ENCODE measurements at regions of chr15 and their contacts with region 1.

Region 1: DNA sequence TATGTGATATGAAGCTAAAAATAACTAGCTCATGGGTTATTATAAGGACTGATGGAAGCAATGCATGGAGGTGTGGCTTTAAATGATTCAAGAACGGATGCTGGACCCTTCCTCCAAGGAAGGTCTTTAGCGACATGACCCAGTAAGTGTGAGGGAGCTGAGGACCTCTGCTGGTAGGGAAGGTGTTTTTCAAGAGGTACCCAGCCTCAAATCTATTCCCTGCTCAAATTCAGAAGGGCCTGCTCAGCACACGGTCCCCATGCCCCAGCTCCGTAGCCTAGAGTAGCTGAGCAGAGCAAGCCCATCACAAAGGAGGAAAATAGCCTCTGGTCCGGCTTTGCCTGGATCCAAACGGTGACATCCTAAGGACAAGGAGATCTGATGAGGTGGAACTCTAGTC is 266.2 kb upstream of the IGF1R start:
- DNase-seq: peak in 1 of 2 donors; percentile 32
- H3K4me3 ChIP-seq: no peak overlapping the region
- H3K27ac ChIP-seq: no peak overlapping the region
- H3K4me1 ChIP-seq: no peaks in the 10 kb centered on the region
- H3K27me3 ChIP-seq: no peaks in the 10 kb centered on the region
- CTCF ChIP-seq: no peak
- POLR2A ChIP-seq: no peak

Region 2: DNA sequence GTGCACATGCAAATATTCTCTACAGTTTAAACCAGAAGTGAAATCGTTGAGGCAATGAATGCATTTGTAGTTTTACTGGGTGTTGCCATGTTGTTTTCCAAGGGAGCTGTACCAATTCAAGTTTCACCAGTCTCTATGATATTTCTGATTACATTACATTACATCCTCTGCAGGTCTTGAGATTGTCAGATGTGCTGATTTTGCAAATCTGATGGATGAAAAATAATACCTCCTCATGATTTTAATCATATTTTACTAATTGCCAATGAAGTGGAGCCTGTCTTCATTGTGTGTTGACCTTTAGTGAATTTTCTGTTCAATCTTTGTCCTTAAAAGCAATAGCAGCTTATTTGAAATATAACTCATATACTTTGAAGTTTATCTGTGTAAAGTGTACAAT is 1769.2 kb before region 1 on chr15:
- intact Hi-C with region 1: loop called (anchors 5 kb)
- DNase-seq: no peak
- H3K4me3 ChIP-seq: no peak overlapping the region
- H3K27ac ChIP-seq: no peak overlapping the region
- H3K4me1 ChIP-seq: no peaks in the 10 kb centered on the region
- H3K27me3 ChIP-seq: no peaks in the 10 kb centered on the region
- CTCF ChIP-seq: no peak
- POLR2A ChIP-seq: no peak

Measured in vagina (tissue), 2 donors.